HEK293 (cell line): ENCODE measurements at regions of chr10 and their contacts with region 1.

Region 1: GRCh38 chr10:28925121-28925698 is 247.9 kb downstream of the BAMBI start:
- H3K4me3 ChIP-seq: no peak overlapping the region
- H3K27ac ChIP-seq: no peak overlapping the region
- H3K4me1 ChIP-seq: no peaks in the 10 kb centered on the region
- CTCF ChIP-seq: no peak

Region 2: GRCh38 chr10:28939281-28940157 is 14.3 kb after region 1 on chr10:
- CTCF ChIA-PET with region 1: interaction called, 17 read pairs
- POLR2A ChIA-PET with region 1: no interaction called
- H3K4me3 ChIP-seq: peak overlapping the region; percentile 10
- H3K27ac ChIP-seq: peak overlapping the region; percentile 82
- H3K4me1 ChIP-seq: peaks cover 16% of the 10 kb centered on the region
- CTCF ChIP-seq: peak; percentile 85

Region 3: GRCh38 chr10:28951484-28951883 is 26.3 kb after region 1 on chr10:
- CTCF ChIA-PET with region 1: no interaction called
- POLR2A ChIA-PET with region 1: no interaction called
- H3K4me3 ChIP-seq: no peak overlapping the region
- H3K27ac ChIP-seq: no peak overlapping the region
- H3K4me1 ChIP-seq: no peaks in the 10 kb centered on the region
- CTCF ChIP-seq: no peak